ENCODE measurements at regions of chr11 and their contacts with region 1.

Region 1: DNA sequence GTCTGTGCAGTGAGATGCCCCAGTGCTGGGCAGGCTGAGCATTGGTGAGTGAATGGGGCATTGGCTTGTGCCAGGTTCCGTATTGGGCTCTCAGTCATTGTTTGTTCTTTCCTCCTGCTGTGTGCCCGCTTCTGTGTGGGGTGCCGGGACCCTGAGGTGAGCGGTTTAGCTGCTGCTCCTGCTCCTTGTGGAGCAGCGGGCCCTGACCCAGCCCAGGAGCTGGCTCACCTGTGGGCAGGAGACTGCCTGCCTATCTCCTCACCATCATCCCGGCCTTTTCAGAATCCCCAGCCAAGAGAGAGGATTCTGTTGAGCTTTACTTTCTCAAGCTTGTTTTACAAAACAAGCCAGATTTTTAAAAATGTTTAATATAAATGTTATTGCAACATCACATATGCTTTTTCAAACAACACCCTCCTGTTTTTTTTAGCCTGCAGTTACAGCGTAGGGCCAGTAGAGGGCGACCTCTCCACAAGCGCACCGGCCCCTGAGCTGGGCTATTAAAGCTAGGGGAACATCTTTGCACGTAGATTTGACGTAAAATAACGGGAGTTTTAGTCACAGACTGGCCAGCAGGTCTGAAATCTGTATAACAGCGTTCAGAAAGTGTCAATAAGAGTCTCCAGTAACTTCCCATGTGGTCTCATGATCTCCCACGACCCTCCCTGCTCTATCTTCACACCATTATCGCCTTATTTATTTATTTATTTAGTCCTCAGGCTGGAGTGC is 25.1 kb upstream of the RELT start:
- DNase-seq: peak; percentile 89
- H3K4me3 Mint-ChIP-seq: no peak overlapping the region
- H3K27ac Mint-ChIP-seq: peak overlapping the region; percentile 27
- H3K4me1 Mint-ChIP-seq: peaks cover 9% of the 10 kb centered on the region
- H3K27me3 Mint-ChIP-seq: peaks cover 12% of the 10 kb centered on the region

Region 2: DNA sequence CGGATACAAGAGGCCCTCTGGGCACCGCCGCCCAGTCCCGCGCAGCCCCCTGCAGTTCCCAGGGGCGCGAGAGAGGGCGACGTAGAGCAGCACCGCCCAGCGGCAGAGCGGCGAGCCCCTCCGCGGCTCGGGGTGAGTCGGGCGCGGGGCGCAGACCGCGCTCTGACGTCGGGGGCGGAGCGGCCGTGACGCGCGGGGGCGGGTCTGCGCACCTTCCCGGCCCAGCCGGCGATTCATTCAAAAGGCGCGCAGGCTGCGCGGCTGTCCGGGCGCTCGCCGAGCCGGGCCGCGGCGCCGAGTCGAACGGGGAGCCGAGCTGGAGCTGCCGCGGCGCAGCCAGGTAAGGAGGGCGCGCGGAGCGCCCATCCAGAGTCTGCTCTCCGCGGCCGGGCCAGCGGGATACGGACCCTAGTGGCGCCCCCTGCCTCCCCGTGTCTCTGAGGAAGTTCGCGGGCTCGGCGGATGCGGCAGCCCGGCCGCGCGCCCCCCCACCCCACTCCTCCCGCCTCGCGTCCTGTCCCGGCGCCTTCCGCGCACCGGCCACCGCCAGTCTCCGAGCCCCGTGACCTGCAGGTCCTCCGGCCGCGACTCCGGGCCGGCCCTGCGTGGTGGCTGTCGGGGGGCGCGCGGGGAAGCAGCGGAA is 25.2 kb after region 1 on chr11 and contains the start of gene RELT:
- intact Hi-C with region 1: loop called (anchors 1 kb)
- DNase-seq: peak; percentile 99
- H3K4me3 Mint-ChIP-seq: peak within 1 kb of the TSS; percentile 94
- H3K27ac Mint-ChIP-seq: peak within 1 kb of the TSS; percentile 95
- H3K4me1 Mint-ChIP-seq: peaks cover 35% of the 10 kb centered on the region
- H3K27me3 Mint-ChIP-seq: no peaks in the 10 kb centered on the region
- total RNA-seq, gene RELT: 35.0 and 38.5 TPM in 2 replicates

Region 3: DNA sequence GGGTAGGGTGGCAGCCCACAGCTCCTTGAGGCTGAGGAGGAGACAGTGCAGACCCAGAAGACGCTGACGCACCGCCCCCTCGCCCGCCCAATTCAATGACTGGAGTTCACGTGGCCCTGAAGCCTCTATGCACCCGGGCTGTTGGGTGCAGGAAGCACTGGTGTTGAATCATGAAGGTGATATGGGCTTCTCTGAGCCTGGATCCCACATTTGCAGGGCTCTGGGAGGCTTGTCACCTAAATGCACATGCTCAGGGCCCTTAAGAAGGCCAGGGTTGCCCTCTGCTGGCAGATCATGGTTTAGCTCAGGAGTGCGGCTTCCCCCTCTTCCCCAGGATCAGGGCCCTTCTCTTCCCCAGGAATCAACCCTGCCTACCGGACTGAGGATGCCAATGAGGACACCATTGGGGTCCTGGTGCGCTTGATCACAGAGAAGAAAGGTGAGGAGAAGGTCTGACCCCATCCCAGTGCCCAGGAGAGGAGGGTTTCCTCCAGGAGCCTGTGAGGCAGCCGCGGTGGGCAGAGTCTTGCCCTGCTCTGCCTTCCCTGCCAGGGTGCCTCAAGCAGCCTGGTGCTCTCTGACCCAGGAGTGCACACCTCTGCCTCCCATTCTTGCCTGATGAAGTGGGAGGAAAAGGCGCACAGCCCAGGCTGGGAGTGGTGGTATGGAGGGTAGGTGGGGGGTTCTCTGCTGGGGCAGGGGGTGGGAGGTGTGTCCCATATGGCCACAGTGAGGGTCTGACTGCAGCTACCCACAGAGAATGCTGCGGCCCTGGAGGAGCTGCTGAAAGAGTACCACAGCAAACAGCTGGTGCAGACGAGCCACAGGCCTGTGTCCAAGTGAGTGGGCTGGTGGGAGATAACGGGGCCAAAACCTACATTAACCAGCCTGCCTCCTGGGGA is 42.7 kb after region 1 on chr11:
- intact Hi-C with region 1: loop called (anchors 1 kb)
- DNase-seq: peak; percentile 91
- H3K4me3 Mint-ChIP-seq: no peak overlapping the region
- H3K27ac Mint-ChIP-seq: no peak overlapping the region
- H3K4me1 Mint-ChIP-seq: peaks cover 8% of the 10 kb centered on the region
- H3K27me3 Mint-ChIP-seq: no peaks in the 10 kb centered on the region

Region 4: GRCh38 chr11:73661035-73661628 is 310.1 kb after region 1 on chr11:
- intact Hi-C with region 1: loop called (anchors 1 kb)
- DNase-seq: peak; percentile 95
- H3K4me3 Mint-ChIP-seq: peak overlapping the region; percentile 50
- H3K27ac Mint-ChIP-seq: no peak overlapping the region
- H3K4me1 Mint-ChIP-seq: peaks cover 7% of the 10 kb centered on the region
- H3K27me3 Mint-ChIP-seq: no peaks in the 10 kb centered on the region

Region 5: GRCh38 chr11:73838443-73839122 is 487.5 kb after region 1 on chr11:
- intact Hi-C with region 1: no loop called
- DNase-seq: no peak
- H3K4me3 Mint-ChIP-seq: no peak overlapping the region
- H3K27ac Mint-ChIP-seq: no peak overlapping the region
- H3K4me1 Mint-ChIP-seq: peaks cover 6% of the 10 kb centered on the region
- H3K27me3 Mint-ChIP-seq: no peaks in the 10 kb centered on the region

Measured in activated CD4-positive, alpha-beta T cell treated with anti-CD3 and anti-CD28 coated beads, Interleukin-2, amount 10 ng/mL, durations not matched to agents 24 days and 14 days (primary cell).